ENCODE measurements at regions of chr5 and their contacts with region 1.

Region 1: DNA sequence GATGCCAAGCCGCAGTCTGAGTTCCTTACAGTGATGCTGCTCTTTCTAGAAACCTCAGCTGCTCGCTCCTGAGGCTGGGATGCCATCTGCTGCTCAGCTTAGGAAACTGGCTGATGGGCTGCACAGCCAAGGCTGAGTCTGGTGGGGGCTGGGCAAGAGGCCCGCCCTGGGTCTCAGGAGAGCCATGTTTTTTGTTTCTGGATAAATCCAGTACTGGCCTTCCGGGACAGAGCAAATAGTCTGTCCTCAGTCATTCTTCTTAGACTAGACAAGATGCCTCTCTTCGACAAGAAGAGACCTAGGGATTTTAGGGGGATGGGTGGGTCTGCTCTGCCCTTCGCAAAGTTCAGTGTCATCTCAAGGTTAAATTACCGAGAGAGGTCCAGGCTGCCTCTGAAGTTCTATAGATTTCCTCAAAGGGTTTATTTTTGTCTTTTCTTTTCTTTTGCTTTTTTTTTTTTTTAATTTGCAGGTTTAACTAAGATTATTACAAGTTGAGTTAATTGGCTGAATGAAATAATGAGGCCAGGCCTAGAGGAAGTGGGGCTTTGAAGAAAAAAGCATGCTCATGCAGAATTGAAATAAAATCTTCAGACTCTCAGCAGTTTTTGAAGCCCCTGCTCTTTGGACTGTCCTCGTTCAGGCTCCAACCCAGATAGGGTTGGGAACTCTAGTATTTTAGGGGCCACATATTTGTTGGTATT is 30.6 kb upstream of the MATR3 start:
- DNase-seq: peak; percentile 80 to 88
- H3K4me3 ChIP-seq: no peak overlapping the region
- H3K27ac ChIP-seq: no peak overlapping the region
- H3K4me1 ChIP-seq: no peaks in the 10 kb centered on the region; a peak in 1 of 7 replicates
- H3K27me3 ChIP-seq: no peaks in the 10 kb centered on the region
- CTCF ChIP-seq: peak; percentile 91 to 96 (median 96)
- EP300 ChIP-seq: no peak
- POLR2A ChIP-seq: no peak
- RAD21 ChIP-seq: peak; percentile 99 to 100

Region 2: GRCh38 chr5:139214646-139215045 is 48.2 kb before region 1 on chr5:
- CTCF ChIA-PET with region 1: no interaction called
- POLR2A ChIA-PET with region 1: no interaction called
- DNase-seq: no peak
- H3K4me3 ChIP-seq: no peak overlapping the region
- H3K27ac ChIP-seq: no peak overlapping the region
- H3K4me1 ChIP-seq: peaks cover 0 to 10% (median 2%) of the 10 kb centered on the region in 4 experiments; a peak in 2 of 7 replicates
- H3K27me3 ChIP-seq: no peaks in the 10 kb centered on the region
- CTCF ChIP-seq: no peak
- EP300 ChIP-seq: no peak
- POLR2A ChIP-seq: no peak
- RAD21 ChIP-seq: no peak

Region 3: GRCh38 chr5:139246394-139246793 is 16.5 kb before region 1 on chr5:
- CTCF ChIA-PET with region 1: interaction called, 13 read pairs
- POLR2A ChIA-PET with region 1: no interaction called
- DNase-seq: no peak
- H3K4me3 ChIP-seq: no peak overlapping the region
- H3K27ac ChIP-seq: no peak overlapping the region
- H3K4me1 ChIP-seq: peaks cover 0 to 3% (median 0%) of the 10 kb centered on the region in 4 experiments; a peak in 2 of 7 replicates
- H3K27me3 ChIP-seq: no peaks in the 10 kb centered on the region
- CTCF ChIP-seq: no peak
- EP300 ChIP-seq: no peak
- POLR2A ChIP-seq: no peak
- RAD21 ChIP-seq: peak in 1 of 2 experiments; percentile 2; a peak in 1 of 4 replicates

Region 4: GRCh38 chr5:139273572-139274289 is 10.8 kb after region 1 on chr5:
- CTCF ChIA-PET with region 1: interaction called, 3 read pairs
- POLR2A ChIA-PET with region 1: interaction called, 17 read pairs
- DNase-seq: peak; percentile 82 to 97
- H3K4me3 ChIP-seq: peak overlapping the region; percentile 90 to 100 (median 95)
- H3K27ac ChIP-seq: peak overlapping the region; percentile 92
- H3K4me1 ChIP-seq: peaks cover 14 to 27% (median 22%) of the 10 kb centered on the region in 4 experiments
- H3K27me3 ChIP-seq: no peaks in the 10 kb centered on the region
- CTCF ChIP-seq: no peak
- EP300 ChIP-seq: 0 out of 3 replicates have a peak, but pooled peaks of 1 of the 2 experiments have one; percentile 5
- POLR2A ChIP-seq: peak; percentile 90 to 95
- RAD21 ChIP-seq: peak in 1 of 2 experiments; percentile 2; a peak in 1 of 4 replicates

Region 5: GRCh38 chr5:139403787-139404483 is 141.0 kb after region 1 on chr5 and contains the start of gene SPATA24:
- CTCF ChIA-PET with region 1: no interaction called
- POLR2A ChIA-PET with region 1: no interaction called
- DNase-seq: peak; percentile 87 to 95
- H3K4me3 ChIP-seq: peak within 1 kb of the TSS; percentile 72 to 84 (median 80)
- H3K27ac ChIP-seq: peak within 1 kb of the TSS; percentile 94
- H3K4me1 ChIP-seq: peaks cover 0 to 8% (median 4%) of the 10 kb centered on the region in 4 experiments; a peak in 6 of 7 replicates
- H3K27me3 ChIP-seq: 0 out of 7 replicates have a peak, but pooled peaks cover 0 to 4% (median 0%) of the 10 kb centered on the region in 4 experiments
- CTCF ChIP-seq: no peak
- EP300 ChIP-seq: no peak
- POLR2A ChIP-seq: peak in 1 of 2 experiments; percentile 74; a peak in 2 of 3 replicates
- RAD21 ChIP-seq: no peak
- total RNA-seq, gene SPATA24: 9.4 and 11.6 TPM in 2 replicates